Transverse colon (tissue), 4 donors: ENCODE measurements at regions of chr11 and their contacts with region 1.

Region 1: DNA sequence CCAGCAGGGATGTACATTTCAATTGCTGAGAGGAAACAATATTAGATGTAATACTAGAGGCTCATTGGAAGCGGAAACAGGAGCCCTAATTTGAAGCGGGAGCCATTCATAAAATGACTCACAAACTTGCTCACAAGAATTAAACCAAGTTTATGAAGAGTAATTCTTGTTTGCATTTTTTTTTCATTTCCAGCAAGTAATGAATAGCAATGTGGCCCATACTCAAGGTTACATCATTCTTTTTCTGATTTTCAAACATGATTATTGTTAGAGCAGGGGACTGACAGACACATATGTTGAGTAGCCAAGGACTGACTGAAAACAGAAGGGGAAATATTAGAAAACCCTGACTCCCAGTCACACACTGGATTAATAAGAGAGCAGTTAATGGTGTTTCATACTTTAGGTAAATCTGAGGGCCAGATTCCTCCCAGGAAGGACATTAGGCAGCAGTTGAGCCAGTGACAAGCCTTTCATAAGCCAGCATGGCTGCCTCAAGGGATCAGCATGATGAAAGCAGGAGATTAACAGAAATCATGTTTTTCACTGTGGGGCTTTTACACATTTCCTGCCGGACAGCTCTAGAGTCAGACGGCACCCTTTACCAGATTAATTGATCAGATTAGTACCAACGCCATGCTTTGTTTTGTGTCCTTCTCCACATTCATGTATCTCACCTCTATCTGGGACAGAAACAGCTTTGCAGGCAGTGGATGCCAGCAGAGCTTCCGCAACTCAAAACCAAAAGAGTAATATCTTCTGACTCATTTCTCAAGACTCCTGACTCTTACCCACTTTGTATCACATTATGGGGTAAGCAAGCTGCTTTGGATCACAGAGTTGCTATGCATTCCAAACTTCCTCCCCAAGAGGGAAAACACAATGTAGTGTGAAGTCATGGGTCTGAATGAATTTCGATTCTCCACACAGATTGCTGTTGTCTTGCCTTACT is 831.6 kb downstream of the KCNA4 start:
- DNase-seq: no peak
- H3K4me3 ChIP-seq: no peak overlapping the region
- H3K27ac ChIP-seq: no peak overlapping the region
- H3K4me1 ChIP-seq: no peaks in the 10 kb centered on the region
- H3K27me3 ChIP-seq: no peaks in the 10 kb centered on the region
- CTCF ChIP-seq: no peak
- EP300 ChIP-seq: no peak
- POLR2A ChIP-seq: no peak

Region 2: DNA sequence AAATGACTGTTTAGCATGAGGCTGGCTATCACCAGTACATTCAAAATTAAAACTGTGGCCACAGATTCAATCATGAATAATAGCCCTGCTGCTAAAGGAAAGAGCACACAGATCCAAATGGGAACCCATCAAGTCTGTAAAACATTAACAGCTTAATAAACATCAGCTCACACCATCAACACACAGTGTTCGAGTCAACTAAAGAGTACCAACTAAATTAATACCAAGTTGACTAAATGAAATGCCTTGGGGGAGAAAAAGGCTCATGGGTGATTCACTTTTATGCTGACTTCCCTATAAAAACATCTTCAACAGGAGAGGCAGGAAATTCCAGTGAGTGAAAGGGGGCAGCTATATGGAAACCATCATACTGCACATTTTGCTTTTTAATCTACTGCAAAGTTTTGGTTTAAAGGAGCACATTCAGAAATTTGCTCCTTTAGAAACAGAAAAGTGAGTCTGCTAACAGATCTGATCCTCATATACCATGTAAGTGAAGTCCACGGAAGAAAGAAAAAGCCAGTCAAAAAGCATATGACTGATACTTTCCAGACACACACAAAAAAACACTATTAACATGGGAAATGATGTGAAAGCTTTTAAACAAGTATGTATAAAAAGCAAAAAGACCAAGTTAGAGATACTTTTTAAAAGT is 1728.9 kb before region 1 on chr11:
- in situ Hi-C with region 1: no loop called
- intact Hi-C with region 1: no loop called
- DNase-seq: no peak
- H3K4me3 ChIP-seq: no peak overlapping the region
- H3K27ac ChIP-seq: no peak overlapping the region
- H3K4me1 ChIP-seq: peaks cover 7 to 39% (median 20%) of the 10 kb centered on the region in 4 donors
- H3K27me3 ChIP-seq: no peaks in the 10 kb centered on the region
- CTCF ChIP-seq: no peak
- EP300 ChIP-seq: no peak
- POLR2A ChIP-seq: no peak

Region 3: DNA sequence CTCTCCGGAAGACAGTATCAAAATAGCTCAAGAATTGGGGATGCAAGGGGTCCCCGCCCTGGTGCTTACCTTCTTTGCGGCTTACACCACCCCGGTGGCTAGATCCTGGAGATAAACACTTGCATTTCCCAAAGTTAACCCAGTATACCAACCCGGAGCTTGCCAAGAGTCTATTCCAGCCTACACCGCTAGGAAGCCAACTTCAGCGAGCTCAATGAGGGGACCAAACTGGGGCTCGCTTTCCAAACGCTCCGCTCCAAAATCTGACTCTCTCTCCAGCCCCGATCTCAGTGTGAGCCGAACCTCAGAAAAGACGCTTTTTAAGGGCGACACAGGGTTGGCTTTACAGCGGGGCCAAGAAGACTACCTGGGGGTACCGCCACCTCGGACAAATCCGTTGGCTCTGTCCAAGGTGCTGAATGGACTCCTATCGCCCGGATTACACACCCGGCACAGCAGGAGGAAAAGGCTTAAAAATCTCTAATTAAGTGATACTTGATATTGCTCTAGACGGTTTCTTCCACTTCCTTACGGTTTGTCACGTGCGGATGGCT is 1464.9 kb before region 1 on chr11:
- in situ Hi-C with region 1: no loop called
- intact Hi-C with region 1: no loop called
- DNase-seq: peak; percentile 21
- H3K4me3 ChIP-seq: no peak overlapping the region
- H3K27ac ChIP-seq: no peak overlapping the region
- H3K4me1 ChIP-seq: peaks cover 14 to 31% (median 27%) of the 10 kb centered on the region in 4 donors
- H3K27me3 ChIP-seq: peaks cover 97% of the 10 kb centered on the region
- CTCF ChIP-seq: no peak
- EP300 ChIP-seq: no peak
- POLR2A ChIP-seq: no peak

Region 4: GRCh38 chr11:29293825-29294224 is 108.6 kb after region 1 on chr11:
- in situ Hi-C with region 1: loop called in 1 of 4 experiments (anchors 25 kb)
- intact Hi-C with region 1: no loop called
- DNase-seq: no peak
- H3K4me3 ChIP-seq: no peak overlapping the region
- H3K27ac ChIP-seq: no peak overlapping the region
- H3K4me1 ChIP-seq: no peaks in the 10 kb centered on the region
- H3K27me3 ChIP-seq: no peaks in the 10 kb centered on the region
- CTCF ChIP-seq: no peak
- EP300 ChIP-seq: no peak
- POLR2A ChIP-seq: no peak